Mammary epithelial cell (primary cell): ENCODE measurements at regions of chr1 and their contacts with region 1.

Region 1: GRCh38 chr1:19485362-19486187 is at the start of gene CAPZB:
- DNase-seq: peak; percentile 89
- H3K4me3 ChIP-seq: peak within 1 kb of the TSS; percentile 85 to 99 (median 92)
- H3K27ac ChIP-seq: peak within 1 kb of the TSS; percentile 84
- H3K4me1 ChIP-seq: peaks cover 30% of the 10 kb centered on the region
- H3K27me3 ChIP-seq: no peaks in the 10 kb centered on the region
- CTCF ChIP-seq: no peak
- total RNA-seq, gene CAPZB: 134 to 309 TPM

Region 2: GRCh38 chr1:19341201-19342072 is 144.1 kb before region 1 on chr1:
- CTCF ChIA-PET with region 1: no interaction called
- dilution Hi-C with region 1: loop called (anchors 10 kb)
- in situ Hi-C with region 1: no loop called
- intact Hi-C with region 1: loop called (anchors 5 kb)
- DNase-seq: peak; percentile 59
- H3K4me3 ChIP-seq: no peak overlapping the region
- H3K27ac ChIP-seq: no peak overlapping the region
- H3K4me1 ChIP-seq: peaks cover 8% of the 10 kb centered on the region
- H3K27me3 ChIP-seq: no peaks in the 10 kb centered on the region
- CTCF ChIP-seq: peak; percentile 89 to 90

Region 3: DNA sequence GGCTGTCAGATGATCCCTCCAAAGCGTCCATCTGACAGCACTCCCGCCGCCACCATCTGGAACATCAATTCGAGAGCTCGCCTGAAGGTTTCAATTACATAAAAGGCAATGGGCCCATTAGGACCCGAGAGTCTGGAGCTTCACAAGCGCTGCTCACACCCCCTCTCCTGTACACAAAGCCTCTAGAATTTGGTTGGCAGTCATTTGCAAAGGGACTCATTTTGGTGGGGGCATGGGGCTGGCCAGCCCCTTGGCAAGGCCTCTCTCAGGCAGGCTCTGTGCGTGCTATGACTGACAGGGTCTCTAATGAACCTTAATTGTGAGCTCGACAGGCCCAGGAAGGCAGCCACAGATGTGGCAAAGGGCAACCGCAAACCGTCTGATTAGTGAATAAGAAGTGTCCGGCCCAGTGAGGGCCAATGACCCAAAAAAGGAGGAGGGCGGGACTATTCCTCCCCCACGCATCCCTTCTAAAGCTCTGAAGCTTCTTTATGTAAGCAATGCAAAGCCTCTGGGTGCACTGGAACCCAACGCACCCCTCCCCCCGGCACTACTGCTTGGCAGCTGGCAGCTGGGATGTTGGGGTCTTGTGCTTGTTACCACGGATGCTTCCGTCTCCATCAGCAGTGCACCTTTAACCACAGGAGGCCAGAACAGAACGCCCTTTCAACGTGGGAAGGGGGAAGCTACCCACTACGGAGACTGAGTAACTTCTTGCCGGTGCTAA is 79.7 kb before region 1 on chr1:
- CTCF ChIA-PET with region 1: no interaction called
- dilution Hi-C with region 1: loop called (anchors 5 kb)
- in situ Hi-C with region 1: no loop called
- intact Hi-C with region 1: no loop called
- DNase-seq: no peak
- H3K4me3 ChIP-seq: no peak overlapping the region
- H3K27ac ChIP-seq: no peak overlapping the region
- H3K4me1 ChIP-seq: no peaks in the 10 kb centered on the region
- H3K27me3 ChIP-seq: no peaks in the 10 kb centered on the region
- CTCF ChIP-seq: no peak

Region 4: DNA sequence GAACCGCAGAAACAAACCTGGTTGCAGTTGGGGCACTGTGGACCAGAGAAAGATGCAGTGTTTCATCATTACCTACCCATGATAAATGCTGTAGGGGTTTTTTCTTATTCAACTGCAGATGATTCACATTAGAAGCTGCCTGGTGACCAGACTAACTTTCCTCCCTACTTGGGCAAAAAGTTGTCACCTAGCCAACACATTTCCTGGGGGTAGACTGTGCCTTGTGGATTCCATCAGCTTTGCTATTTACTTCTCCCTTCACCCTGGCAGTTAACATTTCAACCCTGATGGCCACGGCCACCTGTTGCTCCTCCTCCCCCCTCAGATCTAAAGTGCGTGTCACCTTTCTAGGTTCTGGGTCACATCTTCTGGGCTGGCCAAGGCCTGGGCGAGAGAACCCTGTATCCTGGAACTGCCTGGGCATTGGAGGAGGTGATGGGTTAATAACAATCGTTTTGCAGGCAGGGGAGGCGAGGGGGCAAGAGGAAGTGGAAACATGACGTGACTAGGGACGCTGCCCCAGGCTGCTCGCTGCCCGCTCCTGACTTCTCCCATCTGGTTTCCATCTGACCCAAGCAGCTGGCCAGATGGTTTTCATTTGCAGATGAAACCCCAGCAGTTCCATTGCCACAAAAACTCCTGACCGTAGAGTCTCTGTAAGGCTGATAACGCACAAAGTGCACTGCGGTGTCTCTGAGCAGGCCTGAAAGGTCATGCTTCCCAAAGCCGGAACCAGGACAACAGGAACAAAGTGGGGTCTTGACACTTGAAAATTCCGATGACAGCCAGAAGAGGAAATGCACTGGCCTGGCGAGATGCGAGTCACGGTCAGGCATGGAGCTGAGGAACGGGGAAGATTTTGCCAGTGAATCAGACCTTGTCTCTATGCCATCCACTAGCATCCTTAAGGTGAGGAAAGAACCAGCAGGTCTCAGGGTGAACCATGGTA is 36.8 kb before region 1 on chr1:
- CTCF ChIA-PET with region 1: no interaction called
- dilution Hi-C with region 1: no loop called
- in situ Hi-C with region 1: no loop called
- intact Hi-C with region 1: loop called (anchors 2 kb)
- DNase-seq: peak; percentile 84
- H3K4me3 ChIP-seq: no peak overlapping the region
- H3K27ac ChIP-seq: peak overlapping the region; percentile 56
- H3K4me1 ChIP-seq: peaks cover 65% of the 10 kb centered on the region
- H3K27me3 ChIP-seq: no peaks in the 10 kb centered on the region
- CTCF ChIP-seq: no peak

Region 5: GRCh38 chr1:19596714-19597495 is 111.3 kb after region 1 on chr1:
- CTCF ChIA-PET with region 1: no interaction called
- dilution Hi-C with region 1: loop called (anchors 5 kb)
- in situ Hi-C with region 1: no loop called
- intact Hi-C with region 1: no loop called
- DNase-seq: peak; percentile 97
- H3K4me3 ChIP-seq: peak overlapping the region; percentile 92 to 96 (median 95)
- H3K27ac ChIP-seq: peak overlapping the region; percentile 96
- H3K4me1 ChIP-seq: peaks cover 14% of the 10 kb centered on the region
- H3K27me3 ChIP-seq: no peaks in the 10 kb centered on the region
- CTCF ChIP-seq: no peak

Region 6: GRCh38 chr1:19643602-19644394 is 158.2 kb after region 1 on chr1 and contains the start of gene NBL1:
- CTCF ChIA-PET with region 1: no interaction called
- dilution Hi-C with region 1: no loop called
- in situ Hi-C with region 1: loop called in 1 of 2 experiments (anchors 10 kb)
- intact Hi-C with region 1: loop called (anchors 1 kb)
- DNase-seq: peak; percentile 57
- H3K4me3 ChIP-seq: peak within 1 kb of the TSS; percentile 65 to 88 (median 81)
- H3K27ac ChIP-seq: peak within 1 kb of the TSS; percentile 80
- H3K4me1 ChIP-seq: peaks cover 63% of the 10 kb centered on the region
- H3K27me3 ChIP-seq: no peaks in the 10 kb centered on the region
- CTCF ChIP-seq: no peak
- total RNA-seq, gene NBL1: 49.7 to 132 TPM